A673 (cell line): ENCODE measurements at regions of chr6 and their contacts with region 1.

Region 1: DNA sequence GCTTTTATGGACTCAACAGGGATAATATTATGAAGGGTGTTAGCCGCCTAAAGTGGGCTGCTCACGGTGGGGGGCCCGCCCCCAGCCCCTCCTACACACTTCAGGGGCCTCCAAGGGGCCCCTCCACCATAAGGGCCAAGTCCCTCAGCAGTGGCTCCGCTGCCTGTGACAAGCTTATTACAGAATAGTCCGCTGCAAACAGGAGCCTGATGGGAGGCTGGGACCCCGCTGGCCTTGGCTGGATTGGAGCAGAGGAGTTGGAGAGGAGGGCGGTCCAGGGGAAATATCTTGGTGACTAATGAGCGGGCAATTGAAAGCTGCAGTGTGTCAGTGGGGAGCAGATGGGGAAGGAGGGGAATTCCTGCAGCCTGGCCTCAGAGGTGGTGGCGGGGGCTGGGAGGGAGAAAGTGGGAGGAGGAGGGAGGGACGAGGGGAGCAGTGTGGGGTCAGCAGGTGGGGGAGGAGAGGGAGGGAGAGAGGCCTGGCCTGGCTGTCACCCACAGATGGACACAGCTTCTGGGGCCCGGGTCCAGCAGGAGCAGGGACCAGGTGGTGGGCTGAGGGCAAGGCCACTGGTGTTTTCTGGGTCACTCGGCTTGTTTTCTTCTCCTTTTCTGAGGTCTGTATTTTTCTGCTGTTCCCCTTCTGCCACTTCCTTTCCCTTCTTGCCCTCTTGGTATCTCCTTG is 57.6 kb upstream of the FOXP4 start:
- DNase-seq: no peak
- H3K4me3 ChIP-seq: no peak overlapping the region
- H3K27ac ChIP-seq: no peak overlapping the region
- H3K4me1 ChIP-seq: peaks cover 30% of the 10 kb centered on the region
- H3K27me3 ChIP-seq: no peaks in the 10 kb centered on the region
- CTCF ChIP-seq: no peak

Region 2: DNA sequence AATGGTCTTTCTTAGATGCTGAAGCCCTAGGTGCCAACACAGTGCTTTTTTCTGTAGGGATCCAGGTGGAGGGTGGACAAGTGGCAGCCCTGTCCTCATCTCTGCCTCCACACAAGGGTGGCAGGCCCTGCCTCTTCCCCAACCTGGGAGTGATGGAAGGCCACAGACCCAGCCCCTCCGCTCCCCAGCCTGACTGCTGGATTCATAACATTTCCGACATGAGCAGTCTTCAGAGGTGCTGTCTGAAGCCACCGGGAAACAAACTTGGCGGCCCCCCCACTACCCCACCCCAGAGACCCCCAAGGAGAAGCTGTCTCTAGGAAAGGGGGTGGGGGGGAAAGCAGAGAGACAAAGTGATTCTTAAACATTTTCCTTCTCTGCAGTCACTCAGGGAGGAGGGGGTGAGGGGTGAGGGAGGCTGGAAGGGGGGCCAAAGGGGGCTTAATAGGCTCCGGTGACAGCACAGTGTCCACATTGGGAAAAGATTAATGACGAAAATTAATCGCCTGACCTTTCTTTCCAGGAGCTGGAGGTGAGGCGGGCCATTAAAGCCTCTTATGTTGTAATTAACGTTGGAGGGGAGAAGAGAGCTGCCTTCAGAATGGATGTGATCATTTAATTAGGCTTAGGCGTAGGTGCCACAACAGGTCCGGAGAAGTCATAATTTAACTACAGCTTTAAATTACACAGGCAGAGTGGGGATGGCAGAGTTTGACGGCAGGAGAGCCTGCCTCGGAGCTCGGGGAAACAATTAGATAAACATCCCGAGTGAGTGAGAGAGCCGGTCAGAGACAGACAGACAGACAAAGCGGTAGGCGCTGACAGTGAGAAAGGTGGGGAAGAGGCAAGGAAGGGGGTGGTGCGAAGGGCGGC is 19.2 kb before region 1 on chr6:
- CTCF ChIA-PET with region 1: interaction called, 10 read pairs
- POLR2A ChIA-PET with region 1: no interaction called
- intact Hi-C with region 1: no loop called
- DNase-seq: no peak
- H3K4me3 ChIP-seq: peak overlapping the region; percentile 33
- H3K27ac ChIP-seq: no peak overlapping the region
- H3K4me1 ChIP-seq: peaks cover 21% of the 10 kb centered on the region
- H3K27me3 ChIP-seq: no peaks in the 10 kb centered on the region
- CTCF ChIP-seq: no peak